GM12878 (cell line): ENCODE measurements at regions of chr12 and their contacts with region 1.

Region 1: DNA sequence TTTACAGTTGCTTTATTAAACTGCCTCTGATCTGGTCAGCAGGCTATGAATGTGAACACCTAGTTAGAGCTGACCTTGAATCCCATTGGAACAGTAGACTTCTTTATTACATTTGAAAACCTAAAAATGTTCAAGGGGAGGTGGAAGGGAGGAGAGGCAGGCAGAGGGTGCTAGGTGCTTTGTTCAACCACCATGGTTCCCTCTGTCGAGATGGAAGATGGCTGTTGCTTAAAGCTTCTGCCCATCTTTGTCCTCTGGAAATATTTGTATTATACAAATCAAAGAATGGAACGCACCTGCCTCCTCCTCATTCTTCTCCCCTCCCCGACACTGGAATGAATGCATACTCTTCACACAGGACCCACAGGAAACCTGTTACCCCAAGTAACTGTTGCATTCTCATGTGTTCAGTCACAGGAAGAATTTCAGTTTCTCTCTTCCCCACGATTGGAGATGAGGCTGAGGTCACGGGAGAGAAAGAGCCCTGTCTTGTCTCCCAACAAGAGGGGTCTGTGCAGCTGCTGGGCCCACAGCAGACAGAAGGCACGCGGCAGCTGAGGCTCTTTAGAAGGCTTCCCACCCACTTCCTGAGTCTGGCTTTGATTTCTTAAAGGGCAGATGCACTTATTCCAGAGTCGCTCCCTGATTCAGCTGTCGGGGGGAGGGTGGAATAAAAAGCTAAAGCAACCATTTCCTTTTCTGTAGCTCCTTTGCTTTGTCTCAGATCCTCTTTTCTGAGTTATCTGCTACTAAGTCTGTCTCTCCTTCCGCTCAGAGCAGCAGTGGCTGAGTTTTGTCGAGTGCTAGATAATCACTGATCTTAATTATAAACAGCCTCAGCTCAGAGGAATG is 217.9 kb upstream of the BTG1 start:
- DNase-seq: peak; percentile 96
- ATAC-seq: peak; percentile 82
- H3K4me3 ChIP-seq: peak overlapping the region; percentile 62
- H3K27ac ChIP-seq: peak overlapping the region; percentile 99
- H3K4me1 ChIP-seq: peaks cover 17% of the 10 kb centered on the region; the same call in 1 of the 2 replicates
- H3K27me3 ChIP-seq: no peaks in the 10 kb centered on the region
- CTCF ChIP-seq: no peak
- EP300 ChIP-seq: peak; percentile 60 to 79; a peak in 3 of 4 replicates
- POLR2A ChIP-seq: peak; percentile 83
- RAD21 ChIP-seq: peak; percentile 12; the same call in 1 of the 2 replicates

Region 2: GRCh38 chr12:92158796-92159439 is 204.6 kb before region 1 on chr12:
- CTCF ChIA-PET with region 1: interaction called, 3 read pairs
- POLR2A ChIA-PET with region 1: no interaction called
- RAD21 ChIA-PET with region 1: interaction called, 17 read pairs
- SMC1A ChIA-PET with region 1: interaction called, 7 read pairs
- in situ Hi-C with region 1: no loop called
- intact Hi-C with region 1: no loop called
- DNase-seq: no peak
- ATAC-seq: peak; percentile 73
- H3K4me3 ChIP-seq: peak overlapping the region; percentile 59
- H3K27ac ChIP-seq: peak overlapping the region; percentile 87
- H3K4me1 ChIP-seq: peaks cover 21% of the 10 kb centered on the region
- H3K27me3 ChIP-seq: no peaks in the 10 kb centered on the region
- CTCF ChIP-seq: no peak
- EP300 ChIP-seq: peak in 1 of 2 experiments; percentile 40; a peak in 1 of 4 replicates
- POLR2A ChIP-seq: no peak
- RAD21 ChIP-seq: no peak

Region 3: DNA sequence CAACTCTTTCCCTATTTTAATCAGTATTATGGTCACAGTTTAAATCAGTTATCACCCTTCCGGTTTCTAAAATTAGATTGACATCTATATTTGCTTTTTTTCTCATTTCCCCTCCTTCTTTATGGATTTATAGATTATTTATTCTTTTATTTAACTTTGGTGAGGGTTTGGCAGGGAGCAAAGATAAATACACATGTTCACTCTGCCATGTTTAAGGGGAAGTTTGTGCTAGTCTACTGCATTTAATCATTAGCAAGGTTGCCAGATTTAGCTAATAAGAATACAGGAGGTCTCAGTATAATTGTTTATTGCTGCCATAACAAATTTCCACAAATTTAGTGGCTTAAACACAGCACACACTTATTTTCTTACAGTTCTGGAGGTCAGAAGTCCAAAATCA is 13.9 kb before region 1 on chr12:
- CTCF ChIA-PET with region 1: interaction called, 4 read pairs
- POLR2A ChIA-PET with region 1: interaction called, 3 read pairs
- RAD21 ChIA-PET with region 1: no interaction called
- SMC1A ChIA-PET with region 1: interaction called, 12 read pairs
- in situ Hi-C with region 1: no loop called
- intact Hi-C with region 1: no loop called
- DNase-seq: no peak
- ATAC-seq: no peak
- H3K4me3 ChIP-seq: no peak overlapping the region
- H3K27ac ChIP-seq: no peak overlapping the region
- H3K4me1 ChIP-seq: no peaks in the 10 kb centered on the region
- H3K27me3 ChIP-seq: no peaks in the 10 kb centered on the region
- CTCF ChIP-seq: no peak
- EP300 ChIP-seq: no peak
- POLR2A ChIP-seq: no peak
- RAD21 ChIP-seq: no peak

Region 4: DNA sequence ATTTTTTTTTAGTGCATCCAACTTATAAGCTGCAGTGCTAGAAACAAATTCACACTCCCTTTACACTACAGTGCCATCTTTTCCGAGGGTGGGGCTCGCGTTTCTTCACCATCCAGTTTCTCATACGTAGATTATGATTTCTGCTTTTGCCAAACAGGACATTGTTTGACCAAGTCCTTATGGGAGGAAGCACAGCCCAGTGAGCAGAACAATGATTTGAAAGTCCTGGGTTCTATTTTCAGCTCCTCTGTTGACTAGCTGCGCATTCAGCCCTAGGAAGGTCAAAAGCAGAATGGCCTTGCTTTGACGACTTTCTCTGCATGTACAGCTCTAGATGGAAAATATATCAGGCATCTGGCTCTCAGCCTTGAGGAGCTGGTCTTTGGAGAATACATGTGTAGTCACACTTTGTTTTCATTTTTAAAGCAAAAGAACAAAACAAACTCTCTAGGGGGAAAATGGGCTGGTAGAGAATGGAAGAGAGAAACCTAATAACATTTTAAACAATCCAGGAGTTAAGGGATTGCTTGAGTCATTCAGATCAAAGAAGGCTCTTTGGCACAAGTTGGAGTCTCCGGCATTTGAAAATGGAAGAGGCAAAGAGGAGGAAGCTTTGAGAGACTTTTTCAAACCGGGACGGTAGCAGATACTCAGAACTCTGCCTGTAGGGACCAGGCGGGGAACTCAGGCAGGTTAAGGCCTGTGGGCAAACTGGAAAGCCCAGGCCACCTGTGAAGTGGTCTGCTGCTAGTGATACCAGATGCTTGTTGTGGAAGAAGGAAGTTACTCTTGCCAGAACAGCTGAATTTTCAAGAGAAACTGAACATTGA is 81.9 kb after region 1 on chr12:
- CTCF ChIA-PET with region 1: interaction called, 3 read pairs
- POLR2A ChIA-PET with region 1: no interaction called
- RAD21 ChIA-PET with region 1: interaction called, 8 read pairs
- SMC1A ChIA-PET with region 1: interaction called, 39 read pairs
- in situ Hi-C with region 1: no loop called
- intact Hi-C with region 1: loop called (anchors 1 kb)
- DNase-seq: peak; percentile 97
- ATAC-seq: peak; percentile 90
- H3K4me3 ChIP-seq: peak overlapping the region; percentile 41
- H3K27ac ChIP-seq: peak overlapping the region; percentile 100
- H3K4me1 ChIP-seq: peaks cover 44% of the 10 kb centered on the region
- H3K27me3 ChIP-seq: no peaks in the 10 kb centered on the region
- CTCF ChIP-seq: no peak
- EP300 ChIP-seq: peak; percentile 89 to 91
- POLR2A ChIP-seq: peak; percentile 61
- RAD21 ChIP-seq: peak; percentile 32; the same call in 1 of the 2 replicates

Region 5: DNA sequence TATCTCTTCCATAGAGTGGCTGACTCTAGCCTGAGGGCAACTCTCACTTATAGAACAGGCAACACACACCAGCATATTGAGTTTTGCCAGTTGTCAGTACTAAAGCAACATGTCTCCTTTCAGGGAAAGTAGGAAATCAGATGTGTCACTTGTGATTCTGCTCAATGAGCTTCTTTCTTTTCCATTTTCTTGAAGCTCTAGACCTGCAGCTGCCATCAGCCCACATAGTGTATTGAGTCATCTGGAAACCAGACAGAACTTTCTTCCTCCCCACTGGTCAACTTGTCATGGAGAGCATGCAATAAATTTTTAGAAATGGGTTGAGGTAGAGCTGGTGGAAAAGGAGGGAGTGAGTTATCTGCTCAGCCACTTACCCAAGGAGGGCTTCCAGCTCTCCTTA is 130.3 kb after region 1 on chr12:
- CTCF ChIA-PET with region 1: interaction called, 5 read pairs
- POLR2A ChIA-PET with region 1: no interaction called
- RAD21 ChIA-PET with region 1: interaction called, 27 read pairs
- SMC1A ChIA-PET with region 1: interaction called, 21 read pairs
- in situ Hi-C with region 1: no loop called
- intact Hi-C with region 1: loop called (anchors 2 kb)
- DNase-seq: no peak
- ATAC-seq: peak; percentile 57
- H3K4me3 ChIP-seq: no peak overlapping the region
- H3K27ac ChIP-seq: peak overlapping the region; percentile 81
- H3K4me1 ChIP-seq: peaks cover 74% of the 10 kb centered on the region
- H3K27me3 ChIP-seq: no peaks in the 10 kb centered on the region
- CTCF ChIP-seq: no peak
- EP300 ChIP-seq: peak in 1 of 2 experiments; percentile 36; a peak in 1 of 4 replicates
- POLR2A ChIP-seq: no peak
- RAD21 ChIP-seq: no peak

Region 6: GRCh38 chr12:92561543-92561899 is 198.0 kb after region 1 on chr12:
- CTCF ChIA-PET with region 1: interaction called, 9 read pairs
- POLR2A ChIA-PET with region 1: interaction called, 12 read pairs
- RAD21 ChIA-PET with region 1: interaction called, 21 read pairs
- SMC1A ChIA-PET with region 1: interaction called, 16 read pairs
- in situ Hi-C with region 1: no loop called
- intact Hi-C with region 1: no loop called
- DNase-seq: no peak
- ATAC-seq: peak; percentile 13
- H3K4me3 ChIP-seq: peak overlapping the region; percentile 50; the same call in 1 of the 2 replicates
- H3K27ac ChIP-seq: peak overlapping the region; percentile 36
- H3K4me1 ChIP-seq: peaks cover 32% of the 10 kb centered on the region
- H3K27me3 ChIP-seq: no peaks in the 10 kb centered on the region
- CTCF ChIP-seq: no peak
- EP300 ChIP-seq: peak in 1 of 2 experiments; percentile 35; a peak in 1 of 4 replicates
- POLR2A ChIP-seq: no peak
- RAD21 ChIP-seq: no peak